Heart right ventricle (tissue), 16 donors: ENCODE measurements at regions of chr7 and their contacts with region 1.

Region 1: GRCh38 chr7:38686888-38687287 is 55.7 kb upstream of the AMPH start:
- DNase-seq: no peak
- ATAC-seq: no peak
- H3K4me3 ChIP-seq: no peak overlapping the region
- H3K27ac ChIP-seq: no peak overlapping the region
- H3K4me1 ChIP-seq: peaks cover 0 to 12% (median 9%) of the 10 kb centered on the region in 9 donors
- H3K27me3 ChIP-seq: no peaks in the 10 kb centered on the region
- CTCF ChIP-seq: no peak

Region 2: DNA sequence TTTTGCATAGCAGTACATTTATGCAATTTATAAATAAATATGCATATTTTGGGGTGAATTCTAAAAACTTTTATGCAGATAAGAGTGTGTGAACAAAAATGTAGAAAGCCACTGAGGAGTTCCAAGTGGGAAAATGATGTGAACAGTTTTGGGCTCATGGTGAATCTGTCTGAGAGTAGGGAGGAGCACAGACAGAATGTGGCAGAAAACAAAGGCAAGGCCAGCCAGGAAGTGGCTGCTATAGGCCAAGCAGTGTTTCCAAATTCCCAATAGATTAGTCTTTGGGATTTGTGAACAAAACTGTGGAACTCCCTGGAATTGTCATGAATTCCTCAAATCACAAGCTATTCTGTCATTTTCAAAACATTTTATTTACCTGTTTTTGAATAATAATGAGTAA is 17.9 kb after region 1 on chr7:
- intact Hi-C with region 1: loop called in 1 of 10 experiments (anchors 1 kb)
- DNase-seq: no peak
- ATAC-seq: no peak
- H3K4me3 ChIP-seq: no peak overlapping the region
- H3K27ac ChIP-seq: no peak overlapping the region
- H3K4me1 ChIP-seq: peaks cover 0 to 4% (median 0%) of the 10 kb centered on the region in 9 donors
- H3K27me3 ChIP-seq: peaks cover 0 to 8% (median 2%) of the 10 kb centered on the region in 7 donors
- CTCF ChIP-seq: no peak

Region 3: DNA sequence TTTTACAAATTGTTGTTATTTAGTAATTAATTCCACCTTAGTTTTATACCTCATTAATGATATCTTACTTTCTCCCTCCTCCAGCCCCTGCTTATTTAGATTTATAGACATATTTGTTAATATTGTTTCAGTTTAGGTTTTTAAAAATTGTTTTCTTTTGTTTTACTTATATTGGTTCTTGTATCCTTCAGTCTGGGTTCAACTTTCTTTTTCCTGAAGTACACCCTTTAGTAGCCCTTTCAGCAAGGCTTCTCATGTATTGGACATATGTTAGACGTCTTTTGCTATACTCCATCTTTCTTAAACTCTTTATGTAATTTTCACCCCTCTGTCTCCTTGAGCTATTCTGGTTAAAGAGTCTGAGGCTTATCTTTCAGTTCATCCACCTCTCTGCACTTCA is 278.0 kb after region 1 on chr7:
- intact Hi-C with region 1: no loop called
- DNase-seq: no peak
- ATAC-seq: no peak
- H3K4me3 ChIP-seq: no peak overlapping the region
- H3K27ac ChIP-seq: no peak overlapping the region
- H3K4me1 ChIP-seq: no peaks in the 10 kb centered on the region
- H3K27me3 ChIP-seq: peaks cover 0 to 4% (median 0%) of the 10 kb centered on the region in 7 donors
- CTCF ChIP-seq: no peak